ENCODE measurements at regions of chr10 and their contacts with region 1.

Region 1: DNA sequence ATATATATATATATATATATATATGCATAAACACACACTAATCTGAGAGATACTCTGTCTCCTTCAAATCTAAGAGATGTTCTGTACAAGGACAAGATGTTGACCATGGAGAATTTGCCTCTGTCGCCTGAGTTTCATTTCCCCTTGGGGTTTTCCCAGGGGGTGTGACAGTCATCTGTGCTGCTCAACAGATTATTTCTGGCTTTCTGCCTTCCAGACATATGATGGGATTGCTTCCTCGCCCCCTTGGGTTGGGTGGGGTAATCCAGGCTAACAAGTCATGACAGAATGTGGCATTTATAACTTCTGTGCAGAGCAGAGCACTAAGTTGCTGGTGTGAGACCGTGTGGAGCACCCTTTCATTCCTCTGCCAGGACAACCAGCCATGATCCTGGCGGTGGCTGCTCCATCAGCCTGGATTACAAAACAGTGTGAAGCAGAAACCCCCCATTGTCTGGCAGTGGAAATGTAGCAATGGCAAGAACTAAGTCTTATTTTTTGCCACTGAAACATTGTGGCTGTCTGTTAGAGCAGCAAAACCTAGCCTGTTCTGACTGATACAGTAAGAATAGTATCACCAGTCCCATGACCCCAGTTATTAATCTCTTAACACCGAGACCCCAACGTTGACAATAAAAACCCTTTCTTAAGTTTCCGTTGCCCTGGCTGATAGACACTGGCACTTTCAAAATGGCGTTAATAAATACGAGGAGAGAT is 13.7 kb upstream of the USP6NL start:
- DNase-seq: no peak
- ATAC-seq: peak; percentile 80
- H3K4me3 ChIP-seq: no peak overlapping the region
- H3K4me3 Mint-ChIP-seq: no peak overlapping the region
- H3K27ac ChIP-seq: no peak overlapping the region
- H3K27ac Mint-ChIP-seq: no peak overlapping the region
- H3K4me1 ChIP-seq: no peaks in the 10 kb centered on the region
- H3K4me1 Mint-ChIP-seq: peaks cover 0 to 6% (median 0%) of the 10 kb centered on the region in 7 donors
- H3K27me3 ChIP-seq: no peaks in the 10 kb centered on the region
- H3K27me3 Mint-ChIP-seq: peaks cover 0 to 27% (median 0%) of the 10 kb centered on the region in 5 donors

Region 2: DNA sequence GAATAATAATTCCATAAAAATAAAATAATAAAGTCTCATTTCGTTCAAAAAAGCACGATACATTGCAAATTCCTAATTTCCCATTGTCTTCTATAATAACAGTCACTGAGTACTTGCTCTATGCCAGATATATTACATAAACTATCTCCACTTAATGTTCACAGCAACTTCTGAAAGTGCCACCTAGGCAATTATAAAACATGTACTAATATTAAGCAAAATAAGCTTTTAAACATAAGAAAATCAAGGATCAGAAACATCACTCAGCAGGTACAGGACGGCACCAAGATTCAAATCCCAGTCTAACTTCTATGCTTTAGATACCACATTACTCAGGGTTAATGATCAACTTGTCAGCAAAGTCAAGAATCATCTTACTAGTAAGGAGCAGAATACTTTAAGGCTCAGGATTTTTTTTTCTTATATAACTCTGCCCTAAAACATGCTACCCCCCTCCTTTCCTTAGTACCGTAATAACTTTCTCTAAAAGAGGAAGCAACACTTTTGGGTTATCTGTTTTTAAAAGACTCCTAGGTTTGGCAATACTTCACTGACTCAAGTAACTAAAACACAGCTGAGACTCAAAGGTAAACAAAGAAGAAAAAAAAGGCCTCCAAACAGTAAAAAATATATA is 65.0 kb before region 1 on chr10:
- CTCF ChIA-PET with region 1: no interaction called
- POLR2A ChIA-PET with region 1: no interaction called
- intact Hi-C with region 1: no loop called
- DNase-seq: no peak
- ATAC-seq: peak; percentile 71
- H3K4me3 ChIP-seq: no peak overlapping the region
- H3K4me3 Mint-ChIP-seq: no peak overlapping the region
- H3K27ac ChIP-seq: no peak overlapping the region
- H3K27ac Mint-ChIP-seq: no peak overlapping the region
- H3K4me1 ChIP-seq: no peaks in the 10 kb centered on the region
- H3K4me1 Mint-ChIP-seq: peaks cover 3 to 18% (median 15%) of the 10 kb centered on the region in 7 donors
- H3K27me3 ChIP-seq: no peaks in the 10 kb centered on the region
- H3K27me3 Mint-ChIP-seq: peaks cover 0 to 12% (median 0%) of the 10 kb centered on the region in 5 donors

Region 3: GRCh38 chr10:11595395-11595692 is 29.8 kb before region 1 on chr10:
- CTCF ChIA-PET with region 1: no interaction called
- POLR2A ChIA-PET with region 1: no interaction called
- intact Hi-C with region 1: loop called in 1 of 2 experiments (anchors 1 kb)
- DNase-seq: no peak
- ATAC-seq: no peak
- H3K4me3 ChIP-seq: no peak overlapping the region
- H3K4me3 Mint-ChIP-seq: no peak overlapping the region
- H3K27ac ChIP-seq: no peak overlapping the region
- H3K27ac Mint-ChIP-seq: peak overlapping the region in 1 of 9 donors; percentile 70
- H3K4me1 ChIP-seq: no peaks in the 10 kb centered on the region
- H3K4me1 Mint-ChIP-seq: peaks cover 0 to 17% (median 8%) of the 10 kb centered on the region in 7 donors
- H3K27me3 ChIP-seq: no peaks in the 10 kb centered on the region
- H3K27me3 Mint-ChIP-seq: peaks cover 0 to 23% (median 0%) of the 10 kb centered on the region in 5 donors

Region 4: GRCh38 chr10:11647676-11648075 is 22.5 kb after region 1 on chr10:
- CTCF ChIA-PET with region 1: no interaction called
- POLR2A ChIA-PET with region 1: no interaction called
- intact Hi-C with region 1: no loop called
- DNase-seq: no peak
- ATAC-seq: no peak
- H3K4me3 ChIP-seq: no peak overlapping the region
- H3K4me3 Mint-ChIP-seq: no peak overlapping the region
- H3K27ac ChIP-seq: no peak overlapping the region
- H3K27ac Mint-ChIP-seq: no peak overlapping the region
- H3K4me1 ChIP-seq: no peaks in the 10 kb centered on the region
- H3K4me1 Mint-ChIP-seq: peaks cover 0 to 7% (median 0%) of the 10 kb centered on the region in 7 donors
- H3K27me3 ChIP-seq: no peaks in the 10 kb centered on the region
- H3K27me3 Mint-ChIP-seq: peaks cover 0 to 11% (median 7%) of the 10 kb centered on the region in 5 donors

Region 5: GRCh38 chr10:12358863-12359564 is 733.8 kb after region 1 on chr10:
- CTCF ChIA-PET with region 1: no interaction called
- POLR2A ChIA-PET with region 1: no interaction called
- intact Hi-C with region 1: no loop called
- DNase-seq: no peak
- ATAC-seq: peak; percentile 56
- H3K4me3 ChIP-seq: no peak overlapping the region
- H3K4me3 Mint-ChIP-seq: peak overlapping the region in 9 of 10 donors; percentile 10 to 74 (median 42)
- H3K27ac ChIP-seq: no peak overlapping the region
- H3K27ac Mint-ChIP-seq: peak overlapping the region in 8 of 9 donors; percentile 43 to 80 (median 69)
- H3K4me1 ChIP-seq: peaks cover 4 to 7% of the 10 kb centered on the region in 2 donors
- H3K4me1 Mint-ChIP-seq: peaks cover 11 to 80% (median 61%) of the 10 kb centered on the region in 7 donors
- H3K27me3 ChIP-seq: no peaks in the 10 kb centered on the region
- H3K27me3 Mint-ChIP-seq: peaks cover 0 to 17% (median 0%) of the 10 kb centered on the region in 5 donors

Measured in naive thymus-derived CD4-positive, alpha-beta T cell (primary cell).